MCF 10A (cell line): ENCODE measurements at regions of chr2 and their contacts with region 1.

Region 1: DNA sequence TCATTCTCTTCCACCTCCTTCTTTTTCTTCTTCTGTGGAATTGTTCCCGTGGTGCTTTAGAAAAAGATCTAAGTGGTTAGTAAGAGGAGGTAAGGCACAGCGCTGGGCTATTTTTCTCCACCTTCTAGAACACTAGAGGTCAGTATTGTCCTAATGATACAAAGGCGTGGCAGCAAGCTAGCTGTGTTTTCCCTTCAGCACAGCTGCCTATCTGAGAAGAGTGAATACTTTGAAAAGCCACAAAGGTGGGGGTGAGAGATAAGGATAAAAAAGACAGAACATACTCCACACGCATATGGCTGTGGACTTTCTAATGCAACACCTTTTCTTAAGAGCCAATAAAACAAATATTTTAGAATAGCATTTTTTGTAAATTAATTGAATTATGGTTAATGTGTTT is 2.1 kb downstream of the CNTNAP5 start:
- DNase-seq: peak; percentile 73
- H3K4me3 Mint-ChIP-seq: no peak overlapping the region
- H3K27ac Mint-ChIP-seq: no peak overlapping the region
- H3K4me1 Mint-ChIP-seq: peaks cover 12% of the 10 kb centered on the region
- H3K27me3 Mint-ChIP-seq: no peaks in the 10 kb centered on the region
- CTCF ChIP-seq: peak; percentile 67

Region 2: DNA sequence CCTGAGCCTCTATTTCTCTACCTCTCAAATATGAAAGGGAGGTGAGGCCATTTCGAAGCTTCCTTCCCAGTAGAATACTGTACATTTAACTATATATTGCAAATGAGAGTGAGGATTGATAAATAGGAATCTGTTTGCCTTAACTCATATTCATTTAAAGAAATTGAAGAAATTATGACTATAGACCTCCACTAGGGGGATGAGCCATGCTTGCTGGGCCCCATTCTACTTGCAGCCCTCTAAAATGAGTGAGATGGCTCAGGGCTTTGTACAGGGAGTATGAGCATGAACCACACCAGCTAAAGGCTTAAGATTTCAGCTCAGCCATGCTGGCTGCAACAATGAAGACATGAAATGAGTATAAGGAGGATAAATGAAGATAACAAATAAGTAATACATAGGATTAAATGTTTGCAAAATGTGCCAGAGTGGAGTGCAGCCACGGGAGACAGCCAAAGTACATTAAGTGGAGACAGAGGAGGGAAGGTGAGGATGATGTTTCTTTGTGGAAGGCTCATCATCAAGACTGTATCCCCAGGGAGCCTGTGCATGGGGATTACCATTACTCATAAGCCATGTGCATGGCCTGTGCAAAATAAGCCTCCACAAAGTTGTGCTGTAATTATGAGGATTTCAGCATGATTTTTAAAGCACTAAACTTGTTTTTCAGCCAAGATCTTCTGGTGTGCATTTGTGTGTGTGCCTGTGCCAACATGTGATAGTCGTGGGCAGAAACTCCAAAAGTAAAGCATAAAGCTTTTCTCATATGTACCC is 298.7 kb after region 1 on chr2:
- CTCF ChIA-PET with region 1: no interaction called
- POLR2A ChIA-PET with region 1: interaction called, 3 read pairs
- intact Hi-C with region 1: loop called (anchors 5 kb)
- DNase-seq: peak; percentile 17
- H3K4me3 Mint-ChIP-seq: no peak overlapping the region
- H3K27ac Mint-ChIP-seq: no peak overlapping the region
- H3K4me1 Mint-ChIP-seq: peaks cover 10% of the 10 kb centered on the region
- H3K27me3 Mint-ChIP-seq: no peaks in the 10 kb centered on the region
- CTCF ChIP-seq: peak; percentile 14

Region 3: DNA sequence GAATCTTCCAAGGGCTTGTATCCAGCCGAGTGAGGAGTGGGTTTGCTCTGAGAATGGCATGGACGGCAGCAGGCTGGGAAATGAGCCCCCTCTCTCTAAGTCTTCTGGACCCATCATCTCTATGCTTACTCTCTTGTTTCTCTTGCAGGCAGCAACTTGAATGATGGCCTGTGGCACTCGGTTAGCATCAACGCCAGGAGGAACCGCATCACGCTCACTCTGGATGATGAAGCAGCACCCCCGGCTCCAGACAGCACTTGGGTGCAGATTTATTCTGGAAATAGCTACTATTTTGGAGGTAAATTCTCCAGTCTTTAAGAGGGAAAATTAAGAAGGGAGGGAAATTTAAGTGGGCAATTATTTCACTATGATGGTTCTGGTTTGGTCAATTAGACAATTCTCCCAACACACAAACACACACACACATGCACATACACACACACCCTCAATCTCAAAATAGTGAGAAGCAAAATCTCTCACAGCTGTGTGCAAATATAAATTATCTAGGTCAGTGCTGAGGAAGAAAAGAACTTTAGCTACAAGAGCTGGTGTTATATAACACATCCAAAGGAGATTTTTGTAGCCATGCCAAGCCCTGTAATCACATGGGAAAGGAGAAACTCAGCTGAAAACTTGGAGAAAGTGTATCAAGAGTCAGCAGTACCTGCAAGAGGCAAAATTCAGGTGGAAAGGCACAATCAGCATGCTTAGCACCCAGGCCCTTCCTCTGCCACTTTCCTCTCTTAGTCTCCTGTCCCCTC is 497.2 kb after region 1 on chr2:
- CTCF ChIA-PET with region 1: interaction called, 4 read pairs
- POLR2A ChIA-PET with region 1: no interaction called
- intact Hi-C with region 1: loop called (anchors 1 kb)
- DNase-seq: no peak
- H3K4me3 Mint-ChIP-seq: no peak overlapping the region
- H3K27ac Mint-ChIP-seq: no peak overlapping the region
- H3K4me1 Mint-ChIP-seq: peaks cover 7% of the 10 kb centered on the region
- H3K27me3 Mint-ChIP-seq: no peaks in the 10 kb centered on the region
- CTCF ChIP-seq: no peak

Region 4: DNA sequence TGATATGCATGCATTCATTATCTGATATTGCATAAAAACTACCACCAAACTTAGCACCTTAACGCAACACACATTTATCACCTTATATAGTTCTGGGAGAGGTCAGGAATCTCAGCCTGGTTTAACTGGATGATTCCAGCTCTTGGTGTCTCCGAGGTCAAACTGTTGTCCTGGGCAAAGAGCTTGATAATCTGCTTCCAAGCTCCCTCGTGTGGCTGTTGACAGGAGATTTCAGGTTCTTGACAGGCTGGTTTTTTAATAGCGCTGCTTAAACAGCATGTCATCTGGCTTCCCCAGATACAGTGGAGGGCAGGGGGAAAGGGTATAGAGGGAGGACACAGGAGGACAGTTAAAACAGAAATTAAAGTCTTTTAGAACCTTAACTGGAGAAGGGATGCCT is 783.0 kb after region 1 on chr2:
- CTCF ChIA-PET with region 1: interaction called, 98 read pairs
- POLR2A ChIA-PET with region 1: interaction called, 13 read pairs
- intact Hi-C with region 1: loop called (anchors 1 kb)
- DNase-seq: peak; percentile 72
- H3K4me3 Mint-ChIP-seq: no peak overlapping the region
- H3K27ac Mint-ChIP-seq: no peak overlapping the region
- H3K4me1 Mint-ChIP-seq: peaks cover 7% of the 10 kb centered on the region
- H3K27me3 Mint-ChIP-seq: no peaks in the 10 kb centered on the region
- CTCF ChIP-seq: peak; percentile 54

Region 5: DNA sequence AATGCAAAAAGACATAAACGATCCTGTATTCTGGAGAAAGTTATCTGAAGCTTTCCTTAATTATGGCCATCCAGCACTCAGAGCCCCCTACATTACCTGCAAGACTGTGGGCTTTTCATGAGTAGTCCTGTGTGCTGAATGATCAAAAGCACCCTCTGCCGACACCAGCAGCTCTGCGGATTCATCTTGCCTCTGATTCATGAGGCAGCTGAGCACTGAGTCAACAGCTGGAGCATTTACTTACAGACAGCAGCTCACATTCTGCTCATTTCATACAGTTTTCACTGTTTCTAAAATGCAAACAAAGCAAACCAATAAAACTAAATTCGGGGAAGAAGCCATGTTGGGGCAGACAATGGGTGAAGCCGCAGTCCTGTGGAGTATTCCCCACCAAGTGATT is 884.4 kb after region 1 on chr2:
- CTCF ChIA-PET with region 1: interaction called, 3 read pairs
- POLR2A ChIA-PET with region 1: no interaction called
- intact Hi-C with region 1: loop called (anchors 10 kb)
- DNase-seq: peak; percentile 28
- H3K4me3 Mint-ChIP-seq: no peak overlapping the region
- H3K27ac Mint-ChIP-seq: no peak overlapping the region
- H3K4me1 Mint-ChIP-seq: peaks cover 25% of the 10 kb centered on the region
- H3K27me3 Mint-ChIP-seq: no peaks in the 10 kb centered on the region
- CTCF ChIP-seq: no peak

Region 6: DNA sequence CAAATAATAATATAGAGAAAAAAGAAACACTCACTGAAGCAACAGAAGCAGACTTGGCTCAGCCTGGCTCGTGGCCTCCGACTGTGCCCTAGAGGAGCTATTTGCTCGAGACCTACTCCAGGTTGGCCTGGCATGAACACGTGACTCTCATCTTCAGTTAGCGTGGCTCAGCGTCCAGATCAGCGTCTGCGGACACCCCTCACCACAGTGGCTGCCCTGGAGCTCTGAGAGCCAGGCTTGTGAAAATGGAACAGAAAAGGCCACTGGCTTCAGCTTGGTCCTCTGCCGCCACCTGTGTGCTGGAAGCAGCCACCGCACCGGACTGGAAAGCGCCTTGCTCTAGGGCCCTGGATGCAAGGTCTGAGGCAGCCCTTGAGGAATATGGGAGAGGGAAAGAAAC is 1444.8 kb after region 1 on chr2:
- CTCF ChIA-PET with region 1: interaction called, 3 read pairs
- POLR2A ChIA-PET with region 1: no interaction called
- intact Hi-C with region 1: loop called (anchors 2 kb)
- DNase-seq: peak; percentile 51
- H3K4me3 Mint-ChIP-seq: no peak overlapping the region
- H3K27ac Mint-ChIP-seq: no peak overlapping the region
- H3K4me1 Mint-ChIP-seq: no peaks in the 10 kb centered on the region
- H3K27me3 Mint-ChIP-seq: no peaks in the 10 kb centered on the region
- CTCF ChIP-seq: peak; percentile 79